Common myeloid progenitor, CD34-positive (primary cell): ENCODE measurements at regions of chr12 and their contacts with region 1.

Region 1: DNA sequence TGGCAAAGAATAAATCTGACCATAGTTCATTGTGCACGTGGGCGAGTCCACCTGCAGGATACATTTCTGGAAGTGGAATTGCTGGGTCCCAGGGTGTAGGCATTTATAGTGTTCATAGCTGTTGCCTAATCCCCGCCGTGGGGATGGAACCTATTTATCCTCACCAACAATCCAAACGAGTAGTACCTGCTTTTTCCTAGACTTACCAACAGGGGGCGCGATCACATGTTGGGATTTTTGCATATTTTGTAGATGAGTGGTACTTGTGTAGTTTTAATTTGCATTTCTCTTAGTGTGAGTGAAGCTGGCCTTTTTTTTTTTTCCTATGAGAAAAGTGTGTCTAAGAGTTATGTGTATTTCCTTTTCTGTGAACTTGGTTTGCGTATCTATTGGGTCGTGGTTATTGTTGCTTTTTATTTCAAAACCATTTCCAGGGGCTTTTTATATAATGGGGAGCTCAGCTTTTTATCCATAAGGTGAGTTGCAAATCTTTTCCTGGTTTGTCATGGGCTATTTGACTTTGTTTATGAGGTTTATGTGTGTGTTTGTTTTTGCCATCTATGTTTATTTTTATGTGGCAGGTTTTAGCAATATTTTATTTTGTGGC is 67.2 kb downstream of the CCDC92 start:
- DNase-seq: peak; percentile 61 to 82 (median 75)
- H3K4me3 ChIP-seq: no peak overlapping the region
- H3K27ac ChIP-seq: no peak overlapping the region
- H3K4me1 ChIP-seq: peaks cover 0 to 9% (median 8%) of the 10 kb centered on the region in 4 experiments
- H3K27me3 ChIP-seq: no peaks in the 10 kb centered on the region

Region 2: DNA sequence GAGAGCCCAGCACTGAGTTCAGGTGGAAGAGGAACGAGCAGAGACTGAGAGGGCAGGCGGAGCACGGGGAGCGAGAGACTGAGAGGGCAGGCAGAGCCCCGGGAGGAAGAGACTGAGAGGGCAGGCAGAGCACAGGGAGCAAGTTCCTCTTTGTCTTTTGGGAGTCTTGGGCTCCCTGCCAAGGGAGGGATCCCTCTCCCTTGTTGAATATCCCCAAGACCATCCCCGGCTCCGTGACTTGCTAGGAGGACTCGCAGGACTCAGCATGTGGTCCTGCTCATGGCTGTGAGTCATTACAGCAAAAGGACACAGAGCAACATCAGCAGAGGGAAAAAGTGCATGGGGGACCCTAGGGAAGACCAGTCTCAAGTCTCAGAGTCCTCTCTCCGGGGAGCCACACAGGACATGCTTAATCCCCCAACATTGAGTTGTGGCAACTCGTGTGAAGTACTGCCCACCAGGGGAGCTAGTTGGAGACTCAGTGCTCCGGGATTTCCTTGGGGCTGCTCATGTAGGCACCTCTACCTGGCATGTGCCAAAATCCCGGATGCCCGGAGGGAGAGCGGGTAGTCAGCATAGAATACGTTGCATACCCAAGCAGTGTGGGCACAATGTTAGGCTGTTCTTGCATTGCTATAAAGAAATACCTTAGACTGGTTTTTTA is 13.8 kb before region 1 on chr12:
- CTCF ChIA-PET with region 1: interaction called, 14 read pairs
- POLR2A ChIA-PET with region 1: no interaction called
- DNase-seq: no peak
- H3K4me3 ChIP-seq: no peak overlapping the region
- H3K27ac ChIP-seq: no peak overlapping the region
- H3K4me1 ChIP-seq: peaks cover 0 to 4% (median 0%) of the 10 kb centered on the region in 4 experiments
- H3K27me3 ChIP-seq: peaks cover 0 to 2% (median 0%) of the 10 kb centered on the region in 5 experiments

Region 3: DNA sequence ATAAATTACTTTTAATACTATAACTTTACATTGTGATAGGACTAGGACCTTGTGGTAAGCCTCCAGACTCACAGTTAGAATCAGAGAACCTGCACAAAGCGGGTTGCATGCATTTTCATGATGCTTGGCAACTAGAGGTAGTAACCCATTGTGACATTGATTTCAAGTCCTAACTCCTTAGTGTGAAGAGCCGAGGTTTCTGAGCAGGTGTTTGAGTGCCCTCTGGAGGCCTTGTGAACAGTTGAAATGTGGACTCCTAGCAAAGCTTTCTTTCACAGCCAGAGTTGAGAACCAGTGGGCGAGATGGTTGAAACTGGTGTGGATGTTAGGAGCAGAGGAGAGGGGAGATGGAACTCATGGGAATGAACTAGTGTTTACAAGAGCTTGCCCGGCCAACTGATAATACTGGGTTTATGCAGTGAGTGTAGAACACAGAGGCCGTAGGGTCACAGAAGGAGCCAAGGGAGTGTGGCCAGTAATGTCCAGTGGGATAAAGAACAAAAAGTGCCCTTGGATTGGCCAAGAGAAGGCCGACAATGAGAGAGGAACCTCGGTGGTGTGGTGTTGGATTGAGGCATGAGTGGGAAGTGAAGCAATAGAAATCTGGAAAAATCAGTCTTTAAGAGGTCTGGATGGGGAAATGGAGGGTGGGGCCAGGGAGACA is 78.5 kb after region 1 on chr12:
- CTCF ChIA-PET with region 1: interaction called, 30 read pairs
- POLR2A ChIA-PET with region 1: no interaction called
- DNase-seq: peak; percentile 68 to 87 (median 84)
- H3K4me3 ChIP-seq: no peak overlapping the region
- H3K27ac ChIP-seq: no peak overlapping the region
- H3K4me1 ChIP-seq: no peaks in the 10 kb centered on the region
- H3K27me3 ChIP-seq: no peaks in the 10 kb centered on the region

Region 4: DNA sequence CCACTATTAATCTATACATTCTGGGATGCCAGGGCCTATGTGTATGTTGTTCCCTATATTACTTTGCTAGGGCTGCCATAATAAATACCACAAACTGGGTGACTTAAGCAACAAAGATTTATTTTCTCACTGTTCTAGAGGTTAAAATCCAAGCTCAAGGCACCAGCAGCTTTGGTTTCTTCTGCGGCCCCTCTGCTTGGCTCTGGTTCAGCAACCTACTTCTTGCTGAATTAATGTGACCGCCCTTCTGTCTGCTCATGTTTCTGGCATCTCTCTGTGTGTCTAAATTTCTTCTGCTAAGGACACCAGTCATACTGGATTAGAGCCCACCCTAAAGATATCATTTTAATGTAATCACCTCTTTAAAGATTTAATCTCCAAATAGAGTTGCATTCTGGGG is 152.3 kb after region 1 on chr12:
- CTCF ChIA-PET with region 1: no interaction called
- POLR2A ChIA-PET with region 1: no interaction called
- DNase-seq: no peak
- H3K4me3 ChIP-seq: no peak overlapping the region
- H3K27ac ChIP-seq: no peak overlapping the region
- H3K4me1 ChIP-seq: peaks cover 0 to 2% (median 0%) of the 10 kb centered on the region in 4 experiments
- H3K27me3 ChIP-seq: peaks cover 0 to 2% (median 0%) of the 10 kb centered on the region in 5 experiments